Panc1 (cell line): ENCODE measurements at regions of chr21 and their contacts with region 1.

Region 1: GRCh38 chr21:41786485-41786987 is 19.7 kb upstream of the RIPK4 start:
- DNase-seq: no peak
- ATAC-seq: peak; percentile 83
- H3K4me3 ChIP-seq: peak overlapping the region; percentile 9 to 46; a peak in 2 of 4 replicates
- H3K27ac ChIP-seq: peak overlapping the region; percentile 99
- H3K4me1 ChIP-seq: peaks cover 52% of the 10 kb centered on the region
- H3K27me3 ChIP-seq: no peaks in the 10 kb centered on the region
- CTCF ChIP-seq: no peak

Region 2: DNA sequence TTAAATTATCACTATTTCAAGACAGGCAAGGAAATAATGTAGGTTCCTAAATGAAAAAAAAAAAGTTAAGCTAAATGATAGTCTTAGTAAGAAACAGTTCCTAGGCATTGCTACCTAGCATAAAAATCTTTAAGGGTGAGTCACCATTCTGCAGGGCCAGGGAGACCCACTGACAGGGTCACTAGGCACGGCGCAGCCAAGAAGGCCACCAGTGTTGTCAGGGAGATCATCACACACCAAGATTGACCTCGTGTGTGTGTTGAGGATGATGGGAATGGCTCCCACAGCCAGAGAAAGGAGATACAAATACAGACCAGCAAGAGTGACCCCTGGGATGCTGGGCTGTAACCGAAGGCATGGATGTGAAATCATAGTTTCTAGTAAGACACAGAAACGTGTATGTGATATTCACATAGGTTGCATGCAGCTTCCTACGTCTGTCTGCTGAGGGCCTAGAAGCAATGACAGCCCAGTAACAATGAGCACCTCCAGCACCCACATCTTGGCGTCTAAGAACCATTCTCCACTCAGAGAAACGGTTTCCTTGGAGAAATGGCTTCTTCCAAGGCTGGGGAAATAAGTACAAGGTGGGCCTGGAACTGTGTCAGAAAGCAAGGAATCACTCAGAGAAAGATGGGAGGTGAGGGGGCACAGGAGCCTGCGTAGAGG is 48.7 kb before region 1 on chr21:
- CTCF ChIA-PET with region 1: no interaction called
- POLR2A ChIA-PET with region 1: interaction called, 17 read pairs
- in situ Hi-C with region 1: no loop called
- intact Hi-C with region 1: no loop called
- DNase-seq: no peak
- ATAC-seq: no peak
- H3K4me3 ChIP-seq: no peak overlapping the region
- H3K27ac ChIP-seq: 0 out of 2 replicates have a peak overlapping the region, but pooled peaks have one; percentile 29
- H3K4me1 ChIP-seq: peaks cover 7% of the 10 kb centered on the region
- H3K27me3 ChIP-seq: no peaks in the 10 kb centered on the region
- CTCF ChIP-seq: no peak

Region 3: DNA sequence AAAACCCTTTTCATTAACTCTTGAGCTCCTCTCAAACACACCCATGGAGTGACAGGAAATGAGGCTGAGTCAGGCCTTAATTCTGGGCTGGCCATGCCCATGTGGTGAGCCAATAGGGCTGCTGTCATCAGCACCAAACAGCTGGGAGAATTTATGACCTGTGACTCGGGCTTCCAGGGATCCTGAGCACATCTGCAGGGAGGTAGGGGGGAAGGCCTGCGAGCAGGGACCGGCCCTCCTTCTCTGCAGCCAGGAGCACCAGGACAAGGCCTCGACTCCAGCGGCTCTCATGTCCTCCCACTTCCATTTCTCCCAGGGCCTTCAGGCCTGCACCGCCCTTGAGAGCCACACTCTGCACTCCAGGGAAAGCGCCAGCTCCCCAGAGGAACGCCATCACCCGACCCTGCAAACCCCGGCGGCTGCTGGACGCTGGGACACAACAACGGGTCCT is 34.3 kb before region 1 on chr21:
- CTCF ChIA-PET with region 1: no interaction called
- POLR2A ChIA-PET with region 1: no interaction called
- in situ Hi-C with region 1: no loop called
- intact Hi-C with region 1: no loop called
- DNase-seq: no peak
- ATAC-seq: peak; percentile 57
- H3K4me3 ChIP-seq: peak overlapping the region in 1 of 2 experiments; percentile 2; a peak in 2 of 4 replicates
- H3K27ac ChIP-seq: peak overlapping the region; percentile 94
- H3K4me1 ChIP-seq: peaks cover 90% of the 10 kb centered on the region
- H3K27me3 ChIP-seq: no peaks in the 10 kb centered on the region
- CTCF ChIP-seq: no peak

Region 4: DNA sequence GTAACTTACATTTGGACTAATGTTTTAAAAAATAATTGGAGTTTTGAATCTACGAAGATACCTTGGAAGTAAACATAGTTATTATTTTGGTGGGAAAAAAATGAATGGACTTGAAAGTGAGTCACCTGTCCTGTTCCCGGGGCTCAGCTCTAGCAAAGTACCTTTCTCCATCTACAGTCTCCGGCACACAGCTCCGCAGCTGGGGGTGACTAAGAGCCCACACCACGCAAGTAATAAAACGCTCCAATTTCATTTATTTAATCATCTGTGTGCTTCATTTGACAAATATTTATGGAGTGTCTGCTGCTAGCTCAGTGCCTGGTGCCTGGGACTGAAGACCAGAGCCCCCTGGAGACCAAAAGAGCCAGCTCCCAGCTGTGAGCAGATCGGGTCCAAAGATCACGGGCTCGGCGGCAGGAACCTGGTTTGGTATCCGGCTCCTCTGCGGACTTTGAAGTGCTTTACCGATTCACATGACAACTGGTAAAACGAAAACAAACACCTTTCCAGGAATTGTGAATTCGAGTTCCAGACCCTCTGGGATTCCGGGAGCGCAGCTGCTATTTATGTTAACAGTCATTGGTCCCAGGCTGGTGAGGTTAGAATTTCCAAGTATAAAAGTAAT is 18.0 kb before region 1 on chr21:
- CTCF ChIA-PET with region 1: no interaction called
- POLR2A ChIA-PET with region 1: interaction called, 11 read pairs
- in situ Hi-C with region 1: no loop called
- intact Hi-C with region 1: no loop called
- DNase-seq: no peak
- ATAC-seq: peak; percentile 50
- H3K4me3 ChIP-seq: peak overlapping the region; percentile 72 to 91
- H3K27ac ChIP-seq: peak overlapping the region; percentile 95
- H3K4me1 ChIP-seq: peaks cover 30% of the 10 kb centered on the region
- H3K27me3 ChIP-seq: no peaks in the 10 kb centered on the region
- CTCF ChIP-seq: peak; percentile 67